Right lobe of liver (tissue), 6 donors: ENCODE measurements at regions of chr14 and their contacts with region 1.

Region 1: DNA sequence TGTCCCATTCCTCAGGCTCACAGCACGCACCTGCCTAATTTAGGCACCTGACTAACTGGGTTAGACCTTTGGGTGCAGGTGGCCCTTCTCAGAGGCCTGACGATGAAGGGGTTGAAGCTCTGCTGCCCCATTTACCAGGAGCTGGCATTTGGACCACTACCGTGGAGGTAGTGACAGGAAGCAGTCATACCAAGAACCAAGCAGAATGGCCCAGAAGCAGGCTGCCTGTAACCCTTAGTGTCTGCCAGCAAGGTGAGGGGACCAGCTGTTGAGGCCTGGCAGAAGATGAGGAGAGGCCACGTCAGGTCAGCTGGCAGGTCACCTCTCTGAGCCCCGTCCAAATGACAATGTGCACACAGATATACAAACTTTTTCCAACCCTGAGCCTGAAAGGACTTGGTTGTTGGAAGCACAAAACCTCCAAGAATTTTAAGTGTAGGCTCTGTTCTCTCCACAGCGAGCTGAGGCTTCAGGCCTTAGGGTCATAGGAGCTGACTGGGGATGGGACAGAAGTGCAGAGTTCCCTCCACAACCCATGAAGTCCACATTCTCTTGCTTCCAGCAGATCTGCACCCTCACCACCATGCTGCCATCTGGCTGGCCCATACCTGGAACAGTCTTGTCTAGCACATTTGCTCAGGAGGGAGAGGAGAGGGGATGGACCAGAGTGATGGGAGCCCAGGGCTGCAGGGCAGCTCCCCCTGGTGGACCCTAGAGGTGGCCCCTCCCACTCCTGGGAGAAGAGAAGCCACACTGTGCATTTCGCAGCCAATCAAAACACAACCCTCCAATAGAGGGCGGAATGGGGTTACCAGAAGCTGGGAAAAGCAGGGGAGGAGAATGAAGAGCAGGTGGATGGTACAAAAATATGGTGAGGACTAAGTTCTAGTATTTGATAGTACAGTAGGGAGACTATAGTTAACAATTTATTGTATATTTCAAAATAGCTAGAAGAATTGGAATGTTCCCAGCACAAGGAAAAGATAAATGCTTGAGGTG is 23.3 kb downstream of the VASH1 start:
- DNase-seq: peak in 1 of 3 donors; percentile 69
- ATAC-seq: peak; percentile 86 to 90 (median 88)
- H3K4me3 ChIP-seq: no peak overlapping the region
- H3K27ac ChIP-seq: no peak overlapping the region
- H3K4me1 ChIP-seq: no peaks in the 10 kb centered on the region
- H3K27me3 ChIP-seq: no peaks in the 10 kb centered on the region
- CTCF ChIP-seq: peak; percentile 59 to 84 (median 64)
- POLR2A ChIP-seq: no peak

Region 2: GRCh38 chr14:76701981-76702380 is 82.6 kb before region 1 on chr14:
- intact Hi-C with region 1: loop called in 1 of 2 experiments (anchors 10 kb)
- DNase-seq: peak in 2 of 3 donors; percentile 70 to 87
- ATAC-seq: peak; percentile 65 to 94 (median 80)
- H3K4me3 ChIP-seq: no peak overlapping the region
- H3K27ac ChIP-seq: no peak overlapping the region
- H3K4me1 ChIP-seq: peaks cover 0 to 10% (median 2%) of the 10 kb centered on the region in 4 donors
- H3K27me3 ChIP-seq: no peaks in the 10 kb centered on the region
- CTCF ChIP-seq: no peak
- POLR2A ChIP-seq: no peak

Region 3: GRCh38 chr14:76710056-76711010 is 74.2 kb before region 1 on chr14:
- intact Hi-C with region 1: loop called (anchors 10 kb)
- DNase-seq: no peak
- ATAC-seq: peak; percentile 84 to 91 (median 88)
- H3K4me3 ChIP-seq: no peak overlapping the region
- H3K27ac ChIP-seq: no peak overlapping the region
- H3K4me1 ChIP-seq: no peaks in the 10 kb centered on the region
- H3K27me3 ChIP-seq: no peaks in the 10 kb centered on the region
- CTCF ChIP-seq: peak; percentile 77 to 79 (median 78)
- POLR2A ChIP-seq: no peak